Naive thymus-derived CD4-positive, alpha-beta T cell (primary cell): ENCODE measurements at regions of chr1 and their contacts with region 1.

Region 1: DNA sequence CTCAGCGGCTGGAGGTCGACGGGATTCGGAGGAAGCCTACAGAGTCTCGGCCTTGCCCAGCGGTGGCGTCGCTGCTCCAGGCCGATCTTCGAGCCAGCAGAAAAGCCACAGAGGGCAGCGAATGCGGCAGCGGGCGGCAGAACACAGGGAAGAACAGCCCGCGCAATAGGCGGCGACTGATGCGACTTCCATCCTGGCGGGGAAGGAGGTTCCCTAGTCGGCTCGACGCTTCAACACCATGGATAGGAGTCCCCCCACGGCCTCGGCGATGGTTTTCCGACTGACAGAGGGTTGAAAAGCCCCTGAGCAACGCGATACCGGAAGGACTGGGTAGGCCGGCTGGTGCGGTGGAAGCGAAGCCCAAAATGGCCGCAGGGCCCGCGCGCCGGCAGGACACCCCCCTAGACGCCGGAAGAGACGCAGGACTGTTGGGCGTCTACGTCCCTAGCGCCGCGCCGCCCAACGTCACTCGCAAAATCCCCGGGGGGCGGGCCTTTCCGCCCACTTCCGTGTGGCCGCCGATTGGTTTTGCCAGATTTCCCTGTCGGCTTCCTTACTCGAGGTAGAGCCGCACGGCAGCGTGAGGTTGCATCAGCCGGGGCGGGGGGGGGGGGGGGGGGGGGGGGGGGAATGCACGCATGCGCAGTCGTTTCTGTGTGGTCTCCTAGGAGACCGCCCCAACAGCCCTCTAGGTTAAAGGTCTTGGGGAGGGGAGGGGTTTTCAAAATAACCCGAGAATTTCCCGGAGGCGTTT is at the start of gene PPP1R15B:
- DNase-seq: peak; percentile 92 to 99 (median 98)
- ATAC-seq: peak; percentile 91
- H3K4me3 ChIP-seq: peak within 1 kb of the TSS; percentile 99
- H3K4me3 Mint-ChIP-seq: peak within 1 kb of the TSS; percentile 92 to 99 (median 97)
- H3K27ac ChIP-seq: peak within 1 kb of the TSS; percentile 100
- H3K27ac Mint-ChIP-seq: peak within 1 kb of the TSS; percentile 97 to 100 (median 99)
- H3K4me1 ChIP-seq: peaks cover 0 to 5% of the 10 kb centered on the region in 2 donors
- H3K4me1 Mint-ChIP-seq: peaks cover 8 to 23% (median 14%) of the 10 kb centered on the region in 7 donors
- H3K27me3 ChIP-seq: no peaks in the 10 kb centered on the region
- H3K27me3 Mint-ChIP-seq: no peaks in the 10 kb centered on the region
- total RNA-seq, gene PPP1R15B: 69.5 to 175 (median 73.0) TPM

Region 2: GRCh38 chr1:203290261-203291089 is 1121.2 kb before region 1 on chr1:
- CTCF ChIA-PET with region 1: no interaction called
- POLR2A ChIA-PET with region 1: interaction called, 6 read pairs
- intact Hi-C with region 1: loop called in 1 of 2 experiments (anchors 5 kb)
- DNase-seq: peak; percentile 95 to 98 (median 97)
- ATAC-seq: peak; percentile 76
- H3K4me3 ChIP-seq: peak overlapping the region; percentile 57
- H3K4me3 Mint-ChIP-seq: peak overlapping the region; percentile 75 to 89 (median 86)
- H3K27ac ChIP-seq: peak overlapping the region; percentile 98
- H3K27ac Mint-ChIP-seq: peak overlapping the region; percentile 97 to 100 (median 99)
- H3K4me1 ChIP-seq: peaks cover 54 to 58% of the 10 kb centered on the region in 2 donors
- H3K4me1 Mint-ChIP-seq: peaks cover 44 to 92% (median 86%) of the 10 kb centered on the region in 7 donors
- H3K27me3 ChIP-seq: no peaks in the 10 kb centered on the region
- H3K27me3 Mint-ChIP-seq: peaks cover 0 to 3% (median 0%) of the 10 kb centered on the region in 5 donors

Region 3: DNA sequence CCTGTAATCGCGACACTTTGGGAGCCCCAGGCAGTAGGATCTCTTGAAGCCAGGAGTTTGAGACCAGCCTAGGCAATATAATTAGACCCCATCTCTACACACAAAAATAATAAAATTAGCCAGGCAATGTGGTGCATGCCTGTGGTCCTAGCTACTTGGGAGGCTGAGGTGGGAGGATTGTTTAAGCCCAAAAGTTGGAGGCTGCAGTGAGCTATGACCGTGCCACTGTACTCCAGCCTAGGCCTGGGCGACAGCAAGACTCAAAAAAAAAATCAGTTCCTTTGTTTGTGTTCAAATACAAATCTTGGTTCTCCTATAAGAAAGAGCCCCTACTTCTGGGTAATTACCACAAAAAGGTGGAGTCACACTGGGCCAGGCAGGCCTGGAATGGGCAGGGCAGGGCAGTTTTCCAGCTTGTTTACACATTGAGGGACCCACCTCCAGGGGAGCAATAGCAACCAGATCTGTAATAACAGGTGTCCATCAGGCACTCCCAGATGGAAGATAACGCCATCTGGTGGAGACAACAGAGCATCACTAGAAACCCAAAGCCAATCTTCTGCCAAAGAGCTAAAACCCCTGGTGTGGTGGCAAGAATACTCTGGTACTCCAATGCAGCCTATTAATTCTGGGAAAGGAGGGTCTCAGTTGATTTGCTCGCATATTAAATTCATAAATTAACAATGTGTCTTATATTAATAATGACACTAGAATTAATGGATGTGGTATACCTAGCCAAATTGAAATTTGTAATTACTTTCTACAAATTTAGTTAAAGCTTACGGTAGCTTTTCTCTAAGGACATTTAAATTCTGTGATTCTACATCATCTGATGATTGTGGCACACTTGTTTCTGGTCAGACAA is 13.2 kb before region 1 on chr1:
- CTCF ChIA-PET with region 1: interaction called, 18 read pairs
- POLR2A ChIA-PET with region 1: interaction called, 7 read pairs
- intact Hi-C with region 1: loop called in 1 of 2 experiments (anchors 1 kb)
- DNase-seq: peak in 8 of 9 donors; percentile 44 to 74 (median 66)
- ATAC-seq: peak; percentile 92
- H3K4me3 ChIP-seq: no peak overlapping the region
- H3K4me3 Mint-ChIP-seq: no peak overlapping the region
- H3K27ac ChIP-seq: peak overlapping the region; percentile 54
- H3K27ac Mint-ChIP-seq: peak overlapping the region; percentile 55 to 91 (median 80)
- H3K4me1 ChIP-seq: no peaks in the 10 kb centered on the region
- H3K4me1 Mint-ChIP-seq: peaks cover 4 to 21% (median 8%) of the 10 kb centered on the region in 7 donors
- H3K27me3 ChIP-seq: no peaks in the 10 kb centered on the region
- H3K27me3 Mint-ChIP-seq: no peaks in the 10 kb centered on the region

Region 4: GRCh38 chr1:204494281-204495077 is 82.9 kb after region 1 on chr1 and contains the start of gene PIK3C2B:
- CTCF ChIA-PET with region 1: interaction called, 3 read pairs
- POLR2A ChIA-PET with region 1: interaction called, 12 read pairs
- intact Hi-C with region 1: loop called (anchors 1 kb)
- DNase-seq: peak; percentile 54 to 80 (median 72)
- ATAC-seq: peak; percentile 83
- H3K4me3 ChIP-seq: peak within 1 kb of the TSS; percentile 84
- H3K4me3 Mint-ChIP-seq: peak within 1 kb of the TSS; percentile 92 to 98 (median 95)
- H3K27ac ChIP-seq: peak within 1 kb of the TSS; percentile 87
- H3K27ac Mint-ChIP-seq: peak within 1 kb of the TSS; percentile 83 to 98 (median 93)
- H3K4me1 ChIP-seq: peaks cover 23 to 35% of the 10 kb centered on the region in 2 donors
- H3K4me1 Mint-ChIP-seq: peaks cover 37 to 89% (median 73%) of the 10 kb centered on the region in 7 donors
- H3K27me3 ChIP-seq: no peaks in the 10 kb centered on the region
- H3K27me3 Mint-ChIP-seq: peaks cover 0 to 2% (median 0%) of the 10 kb centered on the region in 5 donors
- total RNA-seq, gene PIK3C2B: 26.8 to 41.9 (median 32.5) TPM

Region 5: GRCh38 chr1:205211169-205211838 is 799.7 kb after region 1 on chr1 and contains the start of gene DSTYK:
- CTCF ChIA-PET with region 1: no interaction called
- POLR2A ChIA-PET with region 1: no interaction called
- intact Hi-C with region 1: loop called in 1 of 2 experiments (anchors 5 kb)
- DNase-seq: peak; percentile 77 to 95 (median 93)
- ATAC-seq: peak; percentile 95
- H3K4me3 ChIP-seq: peak within 1 kb of the TSS; percentile 75
- H3K4me3 Mint-ChIP-seq: peak within 1 kb of the TSS; percentile 89 to 98 (median 96)
- H3K27ac ChIP-seq: peak within 1 kb of the TSS; percentile 87
- H3K27ac Mint-ChIP-seq: peak within 1 kb of the TSS; percentile 95 to 99 (median 98)
- H3K4me1 ChIP-seq: peaks cover 8% of the 10 kb centered on the region in 2 donors
- H3K4me1 Mint-ChIP-seq: peaks cover 12 to 66% (median 54%) of the 10 kb centered on the region in 7 donors
- H3K27me3 ChIP-seq: no peaks in the 10 kb centered on the region
- H3K27me3 Mint-ChIP-seq: peaks cover 0 to 4% (median 0%) of the 10 kb centered on the region in 5 donors
- total RNA-seq, gene DSTYK: 11.3 to 18.5 (median 15.2) TPM